ENCODE measurements at regions of chrX and their contacts with region 1.

Region 1: DNA sequence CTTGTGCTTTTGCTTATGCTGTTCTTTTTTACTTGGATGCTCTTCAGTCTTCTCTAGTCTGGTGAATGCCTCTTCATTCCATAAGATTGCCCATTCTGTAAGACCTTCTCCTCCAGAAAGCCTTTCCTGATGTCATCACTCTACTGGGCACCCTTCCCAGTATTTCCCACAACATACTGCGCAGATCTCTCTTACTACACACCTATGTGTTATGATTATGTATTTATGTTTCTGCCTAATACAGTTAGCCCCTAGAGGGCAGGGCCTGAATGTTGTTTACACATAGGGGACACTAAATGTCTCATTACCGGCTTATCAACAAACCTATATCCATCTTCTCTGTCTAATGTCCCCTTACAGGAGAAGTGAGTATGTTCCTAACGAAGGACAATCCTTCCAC is 21.1 kb downstream of the AIFM1 start:
- DNase-seq: no peak
- ATAC-seq: no peak
- H3K4me3 ChIP-seq: no peak overlapping the region
- H3K27ac ChIP-seq: no peak overlapping the region
- H3K4me1 ChIP-seq: no peaks in the 10 kb centered on the region
- H3K27me3 ChIP-seq: no peaks in the 10 kb centered on the region
- CTCF ChIP-seq: no peak
- EP300 ChIP-seq: no peak
- POLR2A ChIP-seq: no peak
- RAD21 ChIP-seq: no peak

Region 2: GRCh38 chrX:130196466-130196865 is 52.0 kb after region 1 on chrX:
- CTCF ChIA-PET with region 1: no interaction called
- POLR2A ChIA-PET with region 1: no interaction called
- in situ Hi-C with region 1: no loop called
- intact Hi-C with region 1: loop called (anchors 1 kb)
- DNase-seq: no peak
- ATAC-seq: no peak
- H3K4me3 ChIP-seq: no peak overlapping the region
- H3K27ac ChIP-seq: no peak overlapping the region
- H3K4me1 ChIP-seq: peaks cover 13% of the 10 kb centered on the region
- H3K27me3 ChIP-seq: no peaks in the 10 kb centered on the region
- CTCF ChIP-seq: no peak
- EP300 ChIP-seq: no peak
- POLR2A ChIP-seq: no peak
- RAD21 ChIP-seq: no peak

Region 3: GRCh38 chrX:130378008-130378669 is 233.6 kb after region 1 on chrX:
- CTCF ChIA-PET with region 1: no interaction called
- POLR2A ChIA-PET with region 1: no interaction called
- in situ Hi-C with region 1: no loop called
- intact Hi-C with region 1: no loop called
- DNase-seq: no peak
- ATAC-seq: no peak
- H3K4me3 ChIP-seq: no peak overlapping the region
- H3K27ac ChIP-seq: no peak overlapping the region
- H3K4me1 ChIP-seq: no peaks in the 10 kb centered on the region
- H3K27me3 ChIP-seq: no peaks in the 10 kb centered on the region
- CTCF ChIP-seq: no peak
- EP300 ChIP-seq: no peak
- POLR2A ChIP-seq: no peak
- RAD21 ChIP-seq: no peak

Measured in HepG2 (cell line).